ENCODE measurements at regions of chr1 and their contacts with region 1.

Region 1: GRCh38 chr1:107820805-107821204 is 144.2 kb downstream of the VAV3 start:
- DNase-seq: no peak
- ATAC-seq: peak; percentile 81
- H3K4me3 Mint-ChIP-seq: no peak overlapping the region
- H3K27ac Mint-ChIP-seq: peak overlapping the region; percentile 93
- H3K4me1 Mint-ChIP-seq: peaks cover 38% of the 10 kb centered on the region
- H3K27me3 Mint-ChIP-seq: no peaks in the 10 kb centered on the region

Region 2: GRCh38 chr1:107883562-107883961 is 62.8 kb after region 1 on chr1:
- CTCF ChIA-PET with region 1: no interaction called
- POLR2A ChIA-PET with region 1: no interaction called
- intact Hi-C with region 1: loop called in 1 of 2 experiments (anchors 1 kb)
- DNase-seq: no peak
- ATAC-seq: no peak
- H3K4me3 Mint-ChIP-seq: no peak overlapping the region
- H3K27ac Mint-ChIP-seq: no peak overlapping the region
- H3K4me1 Mint-ChIP-seq: peaks cover 13% of the 10 kb centered on the region
- H3K27me3 Mint-ChIP-seq: no peaks in the 10 kb centered on the region

Region 3: GRCh38 chr1:108049178-108049819 is 228.5 kb after region 1 on chr1:
- CTCF ChIA-PET with region 1: no interaction called
- POLR2A ChIA-PET with region 1: no interaction called
- intact Hi-C with region 1: loop called in 1 of 2 experiments (anchors 2 kb)
- DNase-seq: peak; percentile 51
- ATAC-seq: no peak
- H3K4me3 Mint-ChIP-seq: no peak overlapping the region
- H3K27ac Mint-ChIP-seq: no peak overlapping the region
- H3K4me1 Mint-ChIP-seq: peaks cover 20% of the 10 kb centered on the region
- H3K27me3 Mint-ChIP-seq: no peaks in the 10 kb centered on the region